CD8-positive, alpha-beta T cell (primary cell): ENCODE measurements at regions of chr7 and their contacts with region 1.

Region 1: DNA sequence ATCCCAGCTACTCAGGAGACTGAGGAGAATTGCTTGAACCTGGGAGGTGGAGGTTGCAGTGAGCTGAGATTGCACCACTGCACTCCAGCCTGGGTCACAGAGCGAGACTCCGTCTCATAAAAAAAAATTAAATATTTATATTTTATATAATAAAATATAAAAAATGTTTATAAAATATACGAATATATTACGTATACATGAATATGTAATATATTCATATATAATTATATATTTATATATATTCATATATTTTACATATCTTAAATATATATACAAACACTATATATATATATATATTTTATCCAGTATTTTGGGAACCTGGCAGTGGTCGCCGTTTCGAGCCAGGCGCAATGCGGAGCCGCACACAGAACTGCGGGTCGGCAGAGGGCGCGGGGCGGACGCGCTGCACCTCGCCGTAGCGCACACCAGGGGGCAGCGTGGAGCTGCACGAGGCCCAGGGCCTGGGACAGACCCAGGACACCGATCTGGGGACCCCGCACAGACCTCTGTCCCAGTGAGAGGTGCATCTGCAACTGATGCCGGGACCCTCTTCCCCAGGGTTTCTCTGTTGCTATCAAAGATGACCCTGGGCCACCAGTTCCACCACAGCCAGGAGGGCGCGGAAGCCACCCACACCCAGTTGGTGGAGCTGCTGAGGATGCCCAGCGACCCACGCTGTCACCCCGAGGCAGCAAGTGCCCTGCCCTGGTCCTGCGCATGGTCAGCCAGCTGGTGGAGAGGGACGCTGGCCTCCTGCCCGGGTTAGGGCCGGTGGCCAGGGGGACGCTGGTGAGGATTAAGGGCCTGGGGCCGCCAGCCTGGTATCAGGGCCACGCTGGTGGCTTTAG is 22.7 kb downstream of the AP5Z1 start:
- DNase-seq: peak; percentile 27 to 76 (median 59)
- ATAC-seq: peak; percentile 93
- H3K4me3 ChIP-seq: no peak overlapping the region
- H3K4me3 Mint-ChIP-seq: no peak overlapping the region
- H3K27ac ChIP-seq: no peak overlapping the region
- H3K27ac Mint-ChIP-seq: no peak overlapping the region
- H3K4me1 ChIP-seq: peaks cover under 1% of the 10 kb centered on the region
- H3K4me1 Mint-ChIP-seq: peaks cover 3% of the 10 kb centered on the region
- H3K27me3 ChIP-seq: no peaks in the 10 kb centered on the region
- H3K27me3 Mint-ChIP-seq: no peaks in the 10 kb centered on the region
- CTCF ChIP-seq: peak; percentile 99

Region 2: GRCh38 chr7:4159761-4160554 is 638.1 kb before region 1 on chr7:
- CTCF ChIA-PET with region 1: no interaction called
- POLR2A ChIA-PET with region 1: no interaction called
- intact Hi-C with region 1: no loop called
- DNase-seq: no peak
- ATAC-seq: no peak
- H3K4me3 ChIP-seq: no peak overlapping the region
- H3K4me3 Mint-ChIP-seq: no peak overlapping the region
- H3K27ac ChIP-seq: no peak overlapping the region
- H3K27ac Mint-ChIP-seq: no peak overlapping the region
- H3K4me1 ChIP-seq: no peaks in the 10 kb centered on the region
- H3K4me1 Mint-ChIP-seq: no peaks in the 10 kb centered on the region
- H3K27me3 ChIP-seq: no peaks in the 10 kb centered on the region
- H3K27me3 Mint-ChIP-seq: no peaks in the 10 kb centered on the region
- CTCF ChIP-seq: no peak

Region 3: GRCh38 chr7:4883374-4884144 is 85.5 kb after region 1 on chr7 and contains the start of gene RADIL:
- CTCF ChIA-PET with region 1: interaction called, 3 read pairs
- POLR2A ChIA-PET with region 1: no interaction called
- intact Hi-C with region 1: loop called in 1 of 2 experiments (anchors 1 kb)
- DNase-seq: peak; percentile 60 to 90 (median 81)
- ATAC-seq: peak; percentile 98
- H3K4me3 ChIP-seq: peak within 1 kb of the TSS in 1 of 2 experiments; percentile 11
- H3K4me3 Mint-ChIP-seq: peak within 1 kb of the TSS; percentile 75
- H3K27ac ChIP-seq: no peak within 1 kb of the TSS
- H3K27ac Mint-ChIP-seq: no peak within 1 kb of the TSS
- H3K4me1 ChIP-seq: peaks cover 7% of the 10 kb centered on the region
- H3K4me1 Mint-ChIP-seq: peaks cover 10% of the 10 kb centered on the region
- H3K27me3 ChIP-seq: peaks cover 6 to 12% of the 10 kb centered on the region in 2 experiments
- H3K27me3 Mint-ChIP-seq: peaks cover 33% of the 10 kb centered on the region
- CTCF ChIP-seq: peak; percentile 60
- total RNA-seq, gene RADIL: not detected

Region 4: DNA sequence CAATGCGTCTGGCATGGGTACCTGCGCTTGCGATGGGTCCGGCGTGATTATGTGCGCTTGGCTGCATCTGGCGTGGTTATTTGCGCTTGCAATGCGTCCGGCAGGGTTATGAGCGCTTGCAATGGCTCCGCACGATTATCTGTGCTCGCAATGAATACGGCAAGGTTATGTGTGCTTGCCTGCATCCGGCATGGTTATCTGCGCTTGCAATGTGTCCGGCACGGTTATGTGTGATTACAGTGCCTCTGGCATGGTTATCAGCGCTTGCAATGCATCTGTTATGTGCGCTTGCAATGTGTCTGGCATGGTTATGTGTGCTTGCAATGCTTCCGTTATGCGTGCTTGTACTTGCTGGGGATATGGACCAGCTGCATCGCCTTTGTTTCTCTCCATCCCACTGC is 285.2 kb after region 1 on chr7:
- CTCF ChIA-PET with region 1: interaction called, 17 read pairs
- POLR2A ChIA-PET with region 1: no interaction called
- intact Hi-C with region 1: loop called in 1 of 2 experiments (anchors 1 kb)
- DNase-seq: no peak
- ATAC-seq: no peak
- H3K4me3 ChIP-seq: no peak overlapping the region
- H3K4me3 Mint-ChIP-seq: no peak overlapping the region
- H3K27ac ChIP-seq: no peak overlapping the region
- H3K27ac Mint-ChIP-seq: no peak overlapping the region
- H3K4me1 ChIP-seq: peaks cover 3% of the 10 kb centered on the region
- H3K4me1 Mint-ChIP-seq: peaks cover 3% of the 10 kb centered on the region
- H3K27me3 ChIP-seq: peaks cover 0 to 2% of the 10 kb centered on the region in 2 experiments
- H3K27me3 Mint-ChIP-seq: no peaks in the 10 kb centered on the region
- CTCF ChIP-seq: no peak

Region 5: DNA sequence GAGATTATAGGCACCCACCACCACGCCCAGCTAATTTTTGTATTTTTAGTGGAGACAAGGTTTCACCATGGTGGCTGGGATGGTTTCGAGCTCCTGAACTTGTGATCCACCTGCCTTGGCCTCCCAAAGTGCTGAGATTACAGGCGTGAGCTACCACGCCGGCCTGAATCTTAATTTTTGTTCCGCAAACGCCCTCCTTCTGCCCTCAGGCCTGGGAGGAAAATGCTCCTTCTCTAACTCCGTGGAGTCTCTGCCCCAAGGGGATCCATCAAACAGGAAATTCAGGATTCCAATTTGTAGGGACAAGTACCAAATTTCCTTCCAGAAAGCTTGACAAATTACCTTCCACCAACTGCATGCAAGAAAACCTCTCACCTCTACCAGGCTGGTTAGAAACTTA is 290.8 kb after region 1 on chr7:
- CTCF ChIA-PET with region 1: interaction called, 17 read pairs
- POLR2A ChIA-PET with region 1: no interaction called
- intact Hi-C with region 1: loop called in 1 of 2 experiments (anchors 1 kb)
- DNase-seq: no peak
- ATAC-seq: no peak
- H3K4me3 ChIP-seq: no peak overlapping the region
- H3K4me3 Mint-ChIP-seq: no peak overlapping the region
- H3K27ac ChIP-seq: no peak overlapping the region
- H3K27ac Mint-ChIP-seq: no peak overlapping the region
- H3K4me1 ChIP-seq: peaks cover 3% of the 10 kb centered on the region
- H3K4me1 Mint-ChIP-seq: peaks cover 3% of the 10 kb centered on the region
- H3K27me3 ChIP-seq: peaks cover 0 to 2% of the 10 kb centered on the region in 2 experiments
- H3K27me3 Mint-ChIP-seq: no peaks in the 10 kb centered on the region
- CTCF ChIP-seq: no peak

Region 6: DNA sequence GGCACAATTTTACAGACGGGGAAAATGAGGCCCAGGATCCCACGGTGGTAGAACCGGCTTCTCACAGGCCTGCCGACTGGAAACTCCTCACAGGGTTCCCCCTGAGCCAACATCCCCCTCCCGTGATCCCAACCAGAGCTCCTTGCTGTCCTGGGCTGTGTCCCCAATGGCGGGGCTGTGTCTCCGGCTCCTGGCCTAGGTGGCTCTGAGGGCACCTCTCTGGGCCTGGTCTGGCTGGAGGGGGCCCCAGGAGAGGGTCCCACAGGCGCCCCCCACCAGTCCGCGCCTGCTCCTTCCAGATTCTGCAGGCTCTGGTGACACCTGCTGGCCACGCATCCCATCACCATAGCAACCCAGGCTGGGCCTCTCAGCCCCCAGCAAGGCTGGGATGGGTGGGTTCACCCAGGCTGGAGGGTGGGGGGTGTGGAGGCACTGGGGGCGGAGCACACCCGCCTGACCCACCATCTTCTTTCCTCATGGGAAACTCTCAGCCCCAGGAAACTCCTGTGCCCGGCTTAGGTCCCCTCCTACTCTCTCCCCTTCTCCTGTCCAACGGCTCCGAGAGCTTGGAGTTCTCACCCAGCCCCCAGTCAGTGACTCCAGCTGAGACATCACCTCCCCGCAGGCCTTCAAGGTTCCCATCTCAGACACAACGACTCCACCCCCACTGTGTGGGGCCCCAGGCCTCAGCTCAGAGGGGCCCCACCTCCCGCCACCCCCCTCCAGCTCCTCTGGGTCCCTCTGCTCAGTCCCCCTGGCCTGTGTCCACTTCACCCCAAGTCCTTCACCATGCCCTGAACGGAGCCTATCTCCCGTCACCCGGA is 652.7 kb after region 1 on chr7:
- CTCF ChIA-PET with region 1: no interaction called
- POLR2A ChIA-PET with region 1: no interaction called
- intact Hi-C with region 1: loop called in 1 of 2 experiments (anchors 2 kb)
- DNase-seq: peak in 8 of 9 experiments; percentile 19 to 67 (median 51)
- ATAC-seq: peak; percentile 79
- H3K4me3 ChIP-seq: no peak overlapping the region
- H3K4me3 Mint-ChIP-seq: no peak overlapping the region
- H3K27ac ChIP-seq: no peak overlapping the region
- H3K27ac Mint-ChIP-seq: no peak overlapping the region
- H3K4me1 ChIP-seq: no peaks in the 10 kb centered on the region
- H3K4me1 Mint-ChIP-seq: no peaks in the 10 kb centered on the region
- H3K27me3 ChIP-seq: no peaks in the 10 kb centered on the region
- H3K27me3 Mint-ChIP-seq: peaks cover 2% of the 10 kb centered on the region
- CTCF ChIP-seq: peak; percentile 39